ENCODE measurements at regions of chr2 and their contacts with region 1.

Region 1: GRCh38 chr2:125684932-125685331 is 971.0 kb upstream of the GYPC start:
- DNase-seq: no peak
- H3K4me3 Mint-ChIP-seq: no peak overlapping the region
- H3K27ac Mint-ChIP-seq: no peak overlapping the region
- H3K4me1 Mint-ChIP-seq: no peaks in the 10 kb centered on the region
- H3K27me3 Mint-ChIP-seq: no peaks in the 10 kb centered on the region
- CTCF ChIP-seq: no peak

Region 2: GRCh38 chr2:125696561-125696960 is 11.6 kb after region 1 on chr2:
- CTCF ChIA-PET with region 1: interaction called, 3 read pairs
- POLR2A ChIA-PET with region 1: interaction called, 4 read pairs
- intact Hi-C with region 1: loop called (anchors 1 kb)
- DNase-seq: peak; percentile 63
- H3K4me3 Mint-ChIP-seq: no peak overlapping the region
- H3K27ac Mint-ChIP-seq: peak overlapping the region; percentile 12
- H3K4me1 Mint-ChIP-seq: peaks cover 11% of the 10 kb centered on the region
- H3K27me3 Mint-ChIP-seq: no peaks in the 10 kb centered on the region
- CTCF ChIP-seq: no peak

Measured in MCF 10A (cell line).